Aorta (tissue), 5 donors: ENCODE measurements at regions of chr2 and their contacts with region 1.

Region 1: DNA sequence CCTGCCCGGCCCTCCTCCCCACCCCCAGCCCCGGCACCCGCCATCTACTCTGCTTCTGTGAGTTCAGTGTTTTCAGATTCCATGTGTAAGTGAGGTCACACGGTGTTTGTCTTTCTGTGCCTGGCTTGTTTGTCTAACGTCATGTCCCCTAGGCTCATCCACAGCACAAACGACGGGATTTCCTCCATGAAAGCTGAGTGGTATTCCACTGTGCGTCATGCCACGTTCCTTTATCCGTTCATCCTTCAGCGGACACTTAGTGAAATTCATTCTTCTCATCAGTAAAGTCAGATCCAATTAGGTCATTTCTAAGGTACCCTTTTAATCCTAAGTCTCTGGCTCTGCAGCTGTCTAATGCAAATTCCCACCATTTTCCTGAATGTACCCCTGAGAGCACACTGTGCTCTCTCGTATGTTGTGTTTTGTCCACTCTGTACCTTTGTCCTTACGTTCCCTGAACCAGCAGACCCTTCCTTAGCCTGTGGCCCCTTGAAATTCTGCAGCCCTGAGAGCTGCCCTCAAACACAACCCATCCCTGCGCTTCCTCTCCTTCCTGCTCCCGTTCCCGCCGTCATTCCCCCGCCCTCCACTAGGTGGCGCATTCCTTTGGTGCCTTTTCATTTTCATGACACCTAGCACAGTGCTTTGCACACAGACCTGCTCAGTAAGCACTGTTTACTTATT is 44.1 kb downstream of the TRAPPC12 start:
- DNase-seq: peak; percentile 70 to 91
- ATAC-seq: peak; percentile 75
- H3K4me3 ChIP-seq: no peak overlapping the region
- H3K27ac ChIP-seq: no peak overlapping the region
- H3K4me1 ChIP-seq: no peaks in the 10 kb centered on the region
- H3K27me3 ChIP-seq: no peaks in the 10 kb centered on the region

Region 2: DNA sequence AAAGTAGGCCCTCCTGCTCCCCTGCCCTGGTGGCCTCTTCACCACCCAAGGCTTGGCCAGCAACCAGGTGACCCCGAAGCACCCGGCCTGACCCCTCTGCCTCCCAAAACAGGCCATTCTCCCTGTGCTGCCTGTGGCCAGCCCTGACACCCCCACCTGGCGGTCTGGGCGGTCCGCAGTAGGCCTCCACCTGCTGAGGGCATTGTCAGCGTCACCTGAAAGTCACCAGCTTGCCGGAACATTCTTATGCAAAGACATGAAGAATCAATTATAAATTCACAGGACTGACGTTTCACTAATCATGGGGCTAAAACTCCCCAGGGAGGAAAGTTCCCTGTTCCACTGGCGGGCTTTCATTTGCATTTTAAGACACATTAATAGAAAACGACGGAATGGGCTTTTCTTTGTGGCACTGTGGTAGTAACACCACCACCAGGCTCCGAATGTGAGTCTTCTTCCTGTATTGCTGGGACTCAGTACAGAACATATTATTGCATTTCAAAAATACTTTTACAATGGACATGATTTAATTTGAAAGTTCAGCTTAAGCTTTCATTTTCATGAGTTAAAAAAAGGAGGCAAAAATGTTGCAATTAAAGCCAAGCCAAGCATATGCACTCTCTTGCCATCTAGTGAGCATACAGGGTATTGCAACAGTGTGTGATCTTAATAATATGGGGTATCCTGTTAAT is 38.3 kb after region 1 on chr2:
- intact Hi-C with region 1: loop called in 1 of 2 experiments (anchors 5 kb)
- DNase-seq: peak in 1 of 2 donors; percentile 63
- ATAC-seq: peak; percentile 62
- H3K4me3 ChIP-seq: no peak overlapping the region
- H3K27ac ChIP-seq: peak overlapping the region in 1 of 2 donors; percentile 57
- H3K4me1 ChIP-seq: no peaks in the 10 kb centered on the region
- H3K27me3 ChIP-seq: no peaks in the 10 kb centered on the region

Region 3: DNA sequence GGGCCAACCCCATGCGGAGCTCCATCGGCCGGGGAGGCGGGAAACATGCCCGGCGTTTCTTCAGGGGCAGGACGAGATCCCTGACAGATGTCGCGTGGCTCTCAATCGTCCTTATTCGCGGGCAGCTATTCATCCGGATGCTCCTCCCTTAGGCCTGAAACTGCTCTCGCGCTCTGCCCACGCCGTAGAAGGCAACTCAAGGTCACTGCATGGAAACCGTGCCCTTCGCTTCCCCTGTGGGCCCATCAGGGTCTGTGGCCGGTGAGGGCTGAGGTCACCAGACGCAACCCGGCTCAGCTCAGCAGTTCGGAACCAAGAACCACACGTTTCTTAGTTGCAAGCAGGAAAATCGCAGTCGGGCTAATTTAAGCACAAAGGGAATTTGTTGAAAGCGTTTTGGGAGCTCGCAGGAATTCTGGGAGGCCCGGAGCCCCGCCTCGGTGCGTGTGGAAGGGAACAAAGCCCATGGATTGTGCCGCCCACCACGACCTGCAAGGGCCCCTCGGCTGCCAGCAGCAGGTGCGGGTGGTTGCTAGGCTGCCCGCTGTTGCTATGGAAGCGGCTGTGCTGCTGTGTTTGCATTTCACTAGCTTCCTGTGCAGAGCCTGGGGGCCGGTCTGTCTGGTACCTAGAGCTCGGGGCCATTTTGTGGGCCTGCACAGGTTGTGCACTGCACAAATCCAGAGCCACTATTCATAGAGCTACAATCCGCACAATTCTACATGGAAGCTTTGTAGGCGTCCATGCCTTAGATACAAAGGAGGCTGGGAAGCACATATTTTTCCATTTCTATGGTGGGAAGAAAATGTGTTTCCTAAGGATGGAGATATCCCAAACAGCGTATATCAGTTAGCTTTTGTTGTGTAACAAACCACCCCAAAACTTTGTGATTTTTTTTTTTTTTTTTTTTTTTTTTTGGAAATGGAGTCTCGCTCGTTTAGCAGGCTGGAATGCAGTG is 228.3 kb after region 1 on chr2:
- intact Hi-C with region 1: loop called (anchors 2 to 5 kb)
- DNase-seq: peak in 1 of 2 donors; percentile 63
- ATAC-seq: peak; percentile 66
- H3K4me3 ChIP-seq: no peak overlapping the region
- H3K27ac ChIP-seq: no peak overlapping the region
- H3K4me1 ChIP-seq: no peaks in the 10 kb centered on the region
- H3K27me3 ChIP-seq: no peaks in the 10 kb centered on the region